Endothelial cell of umbilical vein (primary cell): ENCODE measurements at regions of chr5 and their contacts with region 1.

Region 1: GRCh38 chr5:154405078-154405792 is 40.6 kb upstream of the SAP30L start:
- DNase-seq: peak; percentile 76
- H3K4me3 ChIP-seq: peak overlapping the region in 1 of 3 experiments; percentile 6
- H3K27ac ChIP-seq: no peak overlapping the region
- H3K4me1 ChIP-seq: no peaks in the 10 kb centered on the region
- H3K27me3 ChIP-seq: no peaks in the 10 kb centered on the region
- CTCF ChIP-seq: peak; percentile 88 to 95
- POLR2A ChIP-seq: no peak

Region 2: GRCh38 chr5:154179846-154180710 is 225.2 kb before region 1 on chr5:
- CTCF ChIA-PET with region 1: interaction called, 39 read pairs
- POLR2A ChIA-PET with region 1: no interaction called
- dilution Hi-C with region 1: no loop called
- intact Hi-C with region 1: loop called (anchors 1 kb)
- DNase-seq: peak; percentile 64
- H3K4me3 ChIP-seq: no peak overlapping the region
- H3K27ac ChIP-seq: no peak overlapping the region
- H3K4me1 ChIP-seq: peaks cover 9% of the 10 kb centered on the region
- H3K27me3 ChIP-seq: peaks cover 15 to 24% of the 10 kb centered on the region in 2 experiments
- CTCF ChIP-seq: peak; percentile 76 to 80
- POLR2A ChIP-seq: no peak

Region 3: GRCh38 chr5:154196955-154197652 is 208.1 kb before region 1 on chr5:
- CTCF ChIA-PET with region 1: interaction called, 100 read pairs
- POLR2A ChIA-PET with region 1: no interaction called
- dilution Hi-C with region 1: no loop called
- intact Hi-C with region 1: loop called (anchors 1 kb)
- DNase-seq: peak; percentile 81
- H3K4me3 ChIP-seq: no peak overlapping the region
- H3K27ac ChIP-seq: peak overlapping the region; percentile 12
- H3K4me1 ChIP-seq: peaks cover 43% of the 10 kb centered on the region
- H3K27me3 ChIP-seq: no peaks in the 10 kb centered on the region
- CTCF ChIP-seq: peak in 1 of 2 donors; percentile 26
- POLR2A ChIP-seq: no peak

Region 4: GRCh38 chr5:154334406-154335064 is 70.7 kb before region 1 on chr5:
- CTCF ChIA-PET with region 1: interaction called, 7 read pairs
- POLR2A ChIA-PET with region 1: no interaction called
- dilution Hi-C with region 1: no loop called
- intact Hi-C with region 1: loop called (anchors 5 kb)
- DNase-seq: peak; percentile 22
- H3K4me3 ChIP-seq: no peak overlapping the region
- H3K27ac ChIP-seq: no peak overlapping the region
- H3K4me1 ChIP-seq: peaks cover 5% of the 10 kb centered on the region
- H3K27me3 ChIP-seq: no peaks in the 10 kb centered on the region
- CTCF ChIP-seq: no peak
- POLR2A ChIP-seq: no peak

Region 5: GRCh38 chr5:154368041-154368800 is 37.0 kb before region 1 on chr5:
- CTCF ChIA-PET with region 1: interaction called, 15 read pairs
- POLR2A ChIA-PET with region 1: no interaction called
- dilution Hi-C with region 1: no loop called
- intact Hi-C with region 1: loop called (anchors 2 kb)
- DNase-seq: peak; percentile 86
- H3K4me3 ChIP-seq: peak overlapping the region in 1 of 3 experiments; percentile 59
- H3K27ac ChIP-seq: peak overlapping the region; percentile 97
- H3K4me1 ChIP-seq: peaks cover 52% of the 10 kb centered on the region
- H3K27me3 ChIP-seq: no peaks in the 10 kb centered on the region
- CTCF ChIP-seq: no peak
- POLR2A ChIP-seq: no peak

Region 6: GRCh38 chr5:154677921-154678320 is 272.7 kb after region 1 on chr5:
- CTCF ChIA-PET with region 1: no interaction called
- POLR2A ChIA-PET with region 1: no interaction called
- dilution Hi-C with region 1: no loop called
- intact Hi-C with region 1: no loop called
- DNase-seq: no peak
- H3K4me3 ChIP-seq: no peak overlapping the region
- H3K27ac ChIP-seq: no peak overlapping the region
- H3K4me1 ChIP-seq: peaks cover under 1% of the 10 kb centered on the region
- H3K27me3 ChIP-seq: no peaks in the 10 kb centered on the region
- CTCF ChIP-seq: no peak
- POLR2A ChIP-seq: no peak